HEK293 (cell line): ENCODE measurements at regions of chr17 and their contacts with region 1.

Region 1: DNA sequence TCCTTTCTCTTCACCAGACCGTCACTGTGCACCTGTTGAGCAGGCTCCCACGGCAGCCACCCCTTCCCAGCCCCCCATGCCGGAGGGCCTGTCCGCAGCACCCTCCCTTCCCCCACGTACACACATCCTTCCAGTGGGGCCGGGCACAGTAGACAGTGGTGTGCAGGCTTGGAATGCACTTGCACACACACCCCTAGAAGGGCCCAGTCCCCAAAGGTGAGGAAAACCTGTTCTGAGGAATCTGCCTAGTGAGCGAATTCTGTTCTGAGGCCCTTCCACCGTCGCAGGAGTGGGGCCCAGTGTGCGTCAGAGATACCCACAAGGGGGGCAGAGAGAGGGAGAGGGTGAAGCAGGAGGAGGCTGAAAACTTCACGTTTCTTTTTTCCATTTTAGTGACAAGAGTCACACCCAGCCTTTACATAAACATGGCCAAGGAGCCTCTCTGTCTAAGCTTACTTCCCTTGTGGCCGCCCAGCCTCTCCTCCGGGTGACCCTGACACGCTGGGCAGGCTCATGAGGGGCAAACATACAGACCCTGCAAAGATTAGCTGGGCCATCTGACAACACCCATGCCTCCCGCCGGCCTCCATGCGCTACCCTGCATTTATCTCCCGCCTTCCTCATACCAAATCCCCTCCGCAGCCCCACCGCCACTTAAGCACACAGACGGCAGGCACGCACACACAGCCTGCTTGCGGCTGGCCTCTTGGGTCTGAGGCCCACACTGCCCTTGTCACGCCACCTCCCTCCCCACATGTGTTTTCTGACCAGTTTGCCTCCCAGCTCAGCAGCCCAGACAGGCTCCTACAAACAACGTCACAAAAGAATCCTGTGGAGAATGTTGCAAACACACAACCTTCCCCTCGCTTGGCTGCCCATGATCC is 1.8 kb downstream of the ZBTB4 start:
- H3K4me3 ChIP-seq: no peak overlapping the region; the same call in 1 of the 2 replicates
- H3K27ac ChIP-seq: peak overlapping the region; percentile 97; the same call in 1 of the 2 replicates
- H3K4me1 ChIP-seq: peaks cover 15% of the 10 kb centered on the region
- CTCF ChIP-seq: no peak

Region 2: DNA sequence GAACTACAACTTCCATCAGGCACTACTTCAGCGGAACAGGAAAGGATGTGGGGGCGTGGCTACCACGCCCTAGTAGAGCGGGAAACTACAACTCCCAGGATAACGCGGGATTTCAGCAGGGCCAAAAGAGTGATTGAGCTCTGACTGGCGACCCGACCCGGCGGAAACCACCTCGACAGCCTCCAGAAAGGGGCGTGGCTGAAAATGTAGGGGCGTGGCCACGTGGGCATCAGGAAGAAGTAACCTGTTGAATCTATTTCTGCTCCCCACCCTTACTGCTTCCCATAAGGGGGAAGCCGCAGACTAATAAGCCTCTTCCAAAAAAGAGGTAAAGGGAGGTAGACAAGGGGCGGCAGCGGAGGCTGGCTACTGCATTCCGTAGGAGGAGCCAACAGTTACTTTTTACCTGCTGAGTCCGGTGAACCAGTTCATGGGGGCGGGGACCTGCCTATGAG is 42.4 kb before region 1 on chr17 and contains the start of gene TMEM102:
- CTCF ChIA-PET with region 1: interaction called, 14 read pairs
- POLR2A ChIA-PET with region 1: interaction called, 10 read pairs
- H3K4me3 ChIP-seq: peak within 1 kb of the TSS; percentile 50
- H3K27ac ChIP-seq: peak within 1 kb of the TSS; percentile 19; the same call in 1 of the 2 replicates
- H3K4me1 ChIP-seq: peaks cover 13% of the 10 kb centered on the region
- CTCF ChIP-seq: no peak